Ascending aorta (tissue), 2 donors: ENCODE measurements at regions of chr17 and their contacts with region 1.

Region 1: DNA sequence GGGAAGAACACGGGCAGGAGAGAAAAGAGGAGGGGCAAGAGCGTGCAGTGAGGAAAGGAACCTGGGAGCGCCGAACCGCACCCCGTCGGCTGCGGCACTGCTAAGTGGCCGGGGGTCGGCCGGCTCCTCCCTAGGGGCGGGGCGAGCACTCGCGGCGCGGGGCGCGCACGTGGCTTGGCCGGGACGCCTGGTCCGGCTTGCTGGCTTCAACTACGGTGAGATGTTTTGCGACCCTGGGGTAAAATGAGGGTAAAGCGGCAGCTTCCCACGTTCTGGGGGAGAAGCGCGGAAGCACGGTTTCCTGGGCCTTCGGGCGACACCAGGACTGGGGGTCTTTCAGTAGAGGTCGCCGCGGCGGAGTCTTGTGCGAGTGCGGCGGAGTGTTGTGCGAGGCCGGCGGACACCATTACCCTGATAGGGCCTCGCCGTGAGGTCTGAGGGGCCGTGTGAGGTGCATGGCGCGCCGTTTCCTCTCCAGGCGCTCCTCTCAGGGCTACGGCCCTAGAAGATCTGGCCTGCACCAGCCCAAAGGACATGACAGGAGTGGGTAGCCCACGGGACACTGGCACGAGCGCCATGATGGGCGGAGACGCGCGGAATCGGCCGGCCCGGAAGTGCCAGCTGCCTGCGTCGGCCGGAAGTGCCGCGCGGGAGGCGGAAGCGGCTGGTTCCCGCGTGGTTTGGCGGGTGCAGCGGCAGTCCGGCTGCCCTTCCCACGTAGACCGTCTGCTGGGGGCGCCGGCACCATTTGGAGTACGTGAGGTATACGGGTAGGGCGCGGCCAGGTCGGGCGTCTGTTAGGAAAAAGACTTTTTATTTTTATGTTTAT is at the starts of genes MYO19 and PIGW:
- DNase-seq: peak; percentile 39 to 92
- H3K4me3 ChIP-seq: peak within 1 kb of the TSS; percentile 78 to 90
- H3K27ac ChIP-seq: peak within 1 kb of the TSS; percentile 88 to 99
- H3K4me1 ChIP-seq: no peaks in the 10 kb centered on the region
- H3K27me3 ChIP-seq: no peaks in the 10 kb centered on the region
- CTCF ChIP-seq: peak in 1 of 3 experiments; percentile 7
- total RNA-seq, gene MYO19: 40.7 TPM
- total RNA-seq, gene PIGW: 6.0 TPM

Region 2: DNA sequence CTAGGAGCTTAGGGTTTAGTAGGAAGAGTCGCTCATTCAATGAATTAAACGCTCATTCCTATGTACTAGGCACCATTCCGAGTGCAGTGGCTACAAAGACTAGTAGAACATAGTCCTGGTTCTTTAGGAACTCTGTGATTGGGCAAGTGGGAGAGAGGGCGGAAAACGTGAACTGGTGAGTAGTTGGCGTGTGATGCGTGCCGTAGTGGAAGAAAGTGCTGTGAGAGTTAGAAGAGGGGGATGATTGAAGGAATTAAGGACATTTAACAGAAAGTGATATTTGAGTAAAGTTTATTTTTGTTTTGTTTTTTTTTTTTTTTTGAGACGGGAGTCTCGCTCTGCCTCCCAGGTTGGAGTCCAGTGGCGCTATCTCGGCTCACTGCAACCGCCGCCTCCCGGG is 966.5 kb before region 1 on chr17:
- intact Hi-C with region 1: loop called (anchors 5 kb)
- DNase-seq: no peak
- H3K4me3 ChIP-seq: peak overlapping the region; percentile 80 to 93
- H3K27ac ChIP-seq: peak overlapping the region; percentile 72 to 84
- H3K4me1 ChIP-seq: peaks cover 3 to 18% of the 10 kb centered on the region in 2 donors
- H3K27me3 ChIP-seq: no peaks in the 10 kb centered on the region
- CTCF ChIP-seq: no peak

Region 3: DNA sequence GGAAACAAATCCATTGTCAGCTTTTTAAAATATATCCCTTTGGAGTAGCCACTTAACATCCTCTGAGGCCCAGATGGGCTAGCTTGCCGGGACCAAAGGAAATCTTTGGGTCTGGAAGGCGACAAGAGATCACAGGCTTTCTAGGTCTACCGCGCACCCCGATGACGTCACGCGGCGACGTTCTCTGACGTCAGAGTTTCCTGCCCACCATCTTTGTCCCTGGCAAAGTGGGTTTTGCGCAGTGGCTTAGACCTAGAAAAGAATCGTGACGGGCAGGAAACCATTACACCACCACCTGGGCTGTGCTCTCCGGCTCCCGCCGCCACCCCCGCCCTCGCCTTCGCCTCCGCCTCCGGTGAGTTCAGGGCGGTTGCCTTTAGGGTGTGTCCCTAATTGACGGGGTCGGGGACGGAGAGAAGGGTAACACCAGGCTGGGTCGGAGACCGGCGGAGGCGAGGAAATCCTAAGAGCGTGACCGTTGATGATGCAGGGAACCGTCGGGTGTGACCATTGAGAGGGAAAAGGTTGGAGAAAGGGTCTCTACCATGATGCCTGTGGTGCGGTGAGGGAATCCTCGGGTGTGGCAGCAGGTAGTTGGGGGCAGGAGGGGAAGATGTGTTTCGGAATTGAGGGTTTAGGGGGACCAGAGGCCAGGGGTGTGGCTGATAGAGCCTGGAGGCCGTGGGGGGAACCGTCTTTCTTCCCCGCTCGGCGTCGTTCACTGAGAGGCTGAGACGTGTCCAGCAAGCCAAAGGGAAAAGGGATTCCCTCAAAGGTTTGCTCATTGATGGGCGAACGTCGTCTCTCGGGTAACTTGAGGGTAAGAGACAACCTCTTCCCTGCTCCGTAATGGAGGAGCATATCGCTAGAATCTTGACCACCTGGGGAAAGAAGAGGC is 947.7 kb before region 1 on chr17 and contains the start of gene AP2B1:
- intact Hi-C with region 1: loop called (anchors 5 kb)
- DNase-seq: peak; percentile 81 to 98
- H3K4me3 ChIP-seq: peak within 1 kb of the TSS; percentile 82 to 99
- H3K27ac ChIP-seq: peak within 1 kb of the TSS; percentile 88 to 96
- H3K4me1 ChIP-seq: peaks cover 5 to 12% of the 10 kb centered on the region in 2 donors
- H3K27me3 ChIP-seq: no peaks in the 10 kb centered on the region
- CTCF ChIP-seq: no peak
- total RNA-seq, gene AP2B1: 59.5 TPM

Region 4: GRCh38 chr17:36475346-36475970 is 59.6 kb before region 1 on chr17:
- intact Hi-C with region 1: no loop called
- DNase-seq: no peak
- H3K4me3 ChIP-seq: no peak overlapping the region
- H3K27ac ChIP-seq: no peak overlapping the region
- H3K4me1 ChIP-seq: no peaks in the 10 kb centered on the region
- H3K27me3 ChIP-seq: no peaks in the 10 kb centered on the region
- CTCF ChIP-seq: no peak

Region 5: DNA sequence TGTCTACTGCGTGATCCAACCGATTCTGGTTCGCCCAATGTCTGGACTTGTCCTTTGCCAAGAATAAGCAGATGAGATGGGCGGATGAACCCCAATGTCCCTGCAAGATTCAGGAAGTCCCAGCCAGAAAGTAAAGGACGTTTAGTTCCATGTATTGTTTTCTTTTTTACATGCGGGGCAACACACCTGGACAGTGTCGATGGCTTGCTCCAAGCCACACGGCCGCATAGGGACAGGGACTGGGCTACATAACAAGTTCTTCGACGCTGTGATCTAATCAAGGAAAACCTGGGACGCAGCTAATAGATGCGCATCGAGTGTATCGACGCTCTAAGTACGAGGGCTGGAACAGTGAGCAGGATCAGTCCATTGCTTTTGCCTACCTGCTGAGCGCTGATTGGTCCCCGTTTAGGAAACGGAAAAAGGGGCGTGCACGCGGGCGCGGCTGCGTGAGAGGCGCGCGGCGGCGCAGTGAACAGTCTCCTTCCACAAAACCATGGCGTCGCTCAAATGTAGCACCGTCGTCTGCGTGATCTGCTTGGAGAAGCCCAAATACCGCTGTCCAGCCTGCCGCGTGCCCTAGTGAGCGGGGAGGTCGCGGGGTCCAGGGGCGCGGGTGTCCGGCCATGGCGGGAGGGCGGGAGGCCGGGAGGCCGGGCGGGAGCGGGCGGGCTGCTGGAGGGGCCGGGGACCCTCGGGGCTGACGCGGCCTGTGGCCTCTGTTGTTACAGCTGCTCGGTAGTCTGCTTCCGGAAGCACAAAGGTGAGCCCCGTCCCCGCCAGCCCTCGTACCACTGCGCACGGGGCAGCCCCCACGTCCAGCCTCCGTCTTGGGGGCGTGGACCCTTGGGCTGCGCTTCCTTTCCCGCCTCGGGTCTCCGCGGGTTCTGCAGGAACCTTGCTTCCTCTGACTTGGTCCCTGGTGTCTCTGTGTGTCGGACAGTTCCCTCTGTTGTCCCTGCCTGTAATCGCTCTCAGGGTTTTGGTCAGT is 48.6 kb before region 1 on chr17 and contains the start of gene ZNHIT3:
- intact Hi-C with region 1: loop called (anchors 2 kb)
- DNase-seq: peak; percentile 77 to 96
- H3K4me3 ChIP-seq: peak within 1 kb of the TSS; percentile 80 to 99
- H3K27ac ChIP-seq: peak within 1 kb of the TSS; percentile 71 to 91
- H3K4me1 ChIP-seq: peaks cover 5 to 24% of the 10 kb centered on the region in 2 donors
- H3K27me3 ChIP-seq: no peaks in the 10 kb centered on the region
- CTCF ChIP-seq: no peak
- total RNA-seq, gene ZNHIT3: 49.4 TPM

Region 6: GRCh38 chr17:36503456-36504155 is 31.4 kb before region 1 on chr17:
- intact Hi-C with region 1: no loop called
- DNase-seq: no peak
- H3K4me3 ChIP-seq: no peak overlapping the region
- H3K27ac ChIP-seq: no peak overlapping the region
- H3K4me1 ChIP-seq: no peaks in the 10 kb centered on the region
- H3K27me3 ChIP-seq: no peaks in the 10 kb centered on the region
- CTCF ChIP-seq: no peak

Region 7: DNA sequence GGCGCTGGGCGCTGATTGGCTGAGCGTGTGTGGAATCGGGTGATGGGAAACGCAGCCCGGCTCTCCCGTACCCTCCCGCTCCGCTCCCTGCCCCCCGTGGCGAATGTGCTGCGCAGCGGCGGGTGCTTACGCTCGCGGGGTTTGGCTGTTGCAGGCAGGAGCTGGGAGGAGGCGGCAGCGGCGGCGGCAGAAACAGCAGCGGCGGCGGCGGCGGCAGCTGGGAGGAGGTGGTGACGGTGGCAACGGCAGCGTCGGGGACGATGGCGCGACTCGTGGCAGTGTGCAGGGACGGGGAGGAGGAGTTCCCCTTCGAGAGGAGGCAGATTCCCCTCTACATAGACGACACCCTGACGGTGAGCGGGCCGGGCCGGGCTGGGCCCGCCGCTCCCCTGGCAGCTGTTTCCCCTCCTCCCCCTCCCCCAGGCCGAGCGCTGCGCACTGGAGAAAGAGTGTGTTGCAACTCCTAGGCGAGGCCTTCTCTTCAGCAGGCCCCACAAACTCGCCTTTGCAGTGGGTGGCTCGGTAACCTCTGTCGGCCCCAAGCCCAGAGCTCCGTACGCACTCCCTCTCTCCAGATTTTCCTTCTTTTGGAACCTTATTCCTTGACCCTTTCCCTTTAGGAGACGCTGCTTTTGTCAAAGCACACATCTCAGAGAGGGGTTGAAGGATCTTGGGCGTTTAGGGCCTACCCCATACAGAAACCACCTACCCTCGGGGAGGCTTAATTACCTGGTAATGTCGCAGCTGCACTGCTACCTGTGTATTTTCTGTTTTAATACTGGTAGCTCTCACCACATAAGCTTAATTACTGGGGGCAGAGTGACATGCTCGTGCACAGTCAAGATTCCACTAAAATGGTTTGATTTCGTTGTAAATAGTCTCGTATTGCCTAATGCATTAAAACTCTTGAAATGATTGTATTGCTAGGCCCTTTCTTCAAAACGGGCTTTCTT is 10.7 kb after region 1 on chr17:
- intact Hi-C with region 1: loop called (anchors 1 kb)
- DNase-seq: peak; percentile 94 to 98
- H3K4me3 ChIP-seq: peak overlapping the region; percentile 95 to 98
- H3K27ac ChIP-seq: peak overlapping the region; percentile 99 to 100
- H3K4me1 ChIP-seq: peaks cover 16 to 35% of the 10 kb centered on the region in 2 donors
- H3K27me3 ChIP-seq: no peaks in the 10 kb centered on the region
- CTCF ChIP-seq: no peak

Region 8: GRCh38 chr17:36601303-36602029 is 66.4 kb after region 1 on chr17 and contains the start of gene MRM1:
- intact Hi-C with region 1: loop called (anchors 2 kb)
- DNase-seq: peak; percentile 71 to 96
- H3K4me3 ChIP-seq: peak within 1 kb of the TSS; percentile 73 to 95
- H3K27ac ChIP-seq: peak within 1 kb of the TSS; percentile 87
- H3K4me1 ChIP-seq: peaks cover 3 to 20% of the 10 kb centered on the region in 2 donors
- H3K27me3 ChIP-seq: no peaks in the 10 kb centered on the region
- CTCF ChIP-seq: peak in 1 of 3 experiments; percentile 2
- total RNA-seq, gene MRM1: not detected

Region 9: DNA sequence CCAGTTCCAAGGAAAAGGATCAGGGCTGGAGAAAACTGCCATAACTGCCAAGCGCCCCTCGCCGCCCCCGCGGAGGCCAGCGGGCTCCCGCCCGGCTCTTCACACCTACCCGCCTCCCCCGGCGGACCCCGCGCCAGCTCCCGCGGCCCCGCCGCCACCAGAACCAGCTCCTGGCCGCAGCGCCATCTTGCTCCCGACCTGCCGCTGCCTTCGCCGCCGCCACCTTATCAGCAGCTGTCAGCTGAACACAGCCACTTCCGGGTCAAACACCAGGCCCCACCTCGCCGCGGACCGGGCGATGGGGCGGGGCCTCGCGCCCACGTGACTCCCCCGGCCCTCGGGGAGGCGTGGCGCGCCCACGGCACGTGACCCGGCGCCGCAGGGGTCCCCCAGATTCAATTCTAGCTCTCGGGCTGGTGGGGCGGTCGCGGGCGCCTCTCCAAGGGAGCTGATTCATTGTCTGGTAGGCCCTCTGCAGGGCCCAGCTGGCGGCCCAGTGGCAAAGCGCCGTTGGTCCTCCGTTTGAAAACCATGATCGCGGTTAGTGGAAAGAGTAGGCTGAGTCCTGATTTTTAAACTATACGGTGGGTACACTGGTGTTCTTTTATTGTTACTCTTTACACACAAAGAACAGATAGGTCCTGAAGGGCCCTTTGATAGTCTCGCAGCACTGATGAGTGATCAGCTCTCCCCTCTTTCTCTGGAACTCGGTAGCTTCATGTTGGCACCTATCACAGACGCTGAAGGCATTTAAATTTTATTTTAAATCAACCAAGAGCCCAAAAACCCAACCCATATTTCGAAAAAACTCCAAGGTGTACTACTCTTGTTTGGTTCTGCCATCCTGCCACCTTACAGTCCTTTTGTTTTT is 1074.4 kb after region 1 on chr17 and contains the start of gene SYNRG:
- intact Hi-C with region 1: loop called (anchors 10 kb)
- DNase-seq: peak; percentile 89 to 99
- H3K4me3 ChIP-seq: peak within 1 kb of the TSS; percentile 69 to 96
- H3K27ac ChIP-seq: peak within 1 kb of the TSS; percentile 82 to 89
- H3K4me1 ChIP-seq: peaks cover 0 to 9% of the 10 kb centered on the region in 2 donors
- H3K27me3 ChIP-seq: no peaks in the 10 kb centered on the region
- CTCF ChIP-seq: peak; percentile 32 to 36 (median 35)
- total RNA-seq, gene SYNRG: 47.1 TPM